ENCODE measurements at regions of chr6 and their contacts with region 1.

Region 1: GRCh38 chr6:30344868-30345671 is at the start of gene RPP21:
- DNase-seq: peak; percentile 74 to 92 (median 85)
- ATAC-seq: peak; percentile 99
- H3K4me3 ChIP-seq: peak within 1 kb of the TSS; percentile 91
- H3K4me3 Mint-ChIP-seq: peak within 1 kb of the TSS; percentile 96
- H3K27ac ChIP-seq: peak within 1 kb of the TSS; percentile 88 to 90
- H3K27ac Mint-ChIP-seq: peak within 1 kb of the TSS; percentile 90
- H3K4me1 ChIP-seq: peaks cover 22% of the 10 kb centered on the region
- H3K4me1 Mint-ChIP-seq: peaks cover 26% of the 10 kb centered on the region
- H3K27me3 ChIP-seq: no peaks in the 10 kb centered on the region
- H3K27me3 Mint-ChIP-seq: no peaks in the 10 kb centered on the region
- CTCF ChIP-seq: no peak
- total RNA-seq, gene RPP21: 42.8 to 51.9 TPM

Region 2: DNA sequence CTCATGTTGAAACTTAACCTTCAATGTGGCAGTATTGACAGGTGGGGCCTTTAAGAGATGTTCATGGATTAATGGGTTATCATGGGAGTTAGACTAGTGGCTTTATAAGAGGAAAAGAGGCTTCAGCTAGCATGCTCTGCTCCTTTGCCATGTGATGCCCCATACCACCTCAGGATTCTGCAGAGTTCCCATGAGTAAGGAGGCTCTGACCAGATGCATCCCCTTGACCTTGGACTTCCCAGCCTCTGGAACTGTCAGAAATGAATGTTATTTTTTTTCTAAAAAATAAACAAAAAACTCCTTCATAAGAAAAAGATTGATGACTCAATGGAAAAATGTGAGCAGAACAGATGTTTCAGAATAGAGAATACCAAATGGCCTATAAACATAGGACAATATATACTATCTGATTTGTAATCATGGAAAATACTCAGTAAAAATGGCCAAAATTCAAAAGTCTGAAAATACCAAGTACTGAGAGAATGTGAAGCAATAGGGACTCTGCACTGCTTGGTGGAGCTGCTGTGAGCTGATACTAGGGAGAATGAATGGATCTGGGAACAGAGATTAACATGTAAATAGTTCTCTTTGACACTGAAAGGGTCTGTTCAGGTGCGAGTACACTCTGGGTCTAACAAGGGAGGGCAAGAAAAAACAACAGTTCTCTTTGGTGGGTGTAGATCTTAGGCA is 25.8 kb before region 1 on chr6:
- CTCF ChIA-PET with region 1: no interaction called
- POLR2A ChIA-PET with region 1: no interaction called
- intact Hi-C with region 1: loop called in 1 of 2 experiments (anchors 5 kb)
- DNase-seq: no peak
- ATAC-seq: no peak
- H3K4me3 ChIP-seq: no peak overlapping the region
- H3K4me3 Mint-ChIP-seq: peak overlapping the region; percentile 20
- H3K27ac ChIP-seq: no peak overlapping the region
- H3K27ac Mint-ChIP-seq: peak overlapping the region; percentile 78
- H3K4me1 ChIP-seq: peaks cover 36% of the 10 kb centered on the region
- H3K4me1 Mint-ChIP-seq: peaks cover 87% of the 10 kb centered on the region
- H3K27me3 ChIP-seq: no peaks in the 10 kb centered on the region
- H3K27me3 Mint-ChIP-seq: no peaks in the 10 kb centered on the region
- CTCF ChIP-seq: no peak